ENCODE measurements at regions of chr9 and their contacts with region 1.

Region 1: DNA sequence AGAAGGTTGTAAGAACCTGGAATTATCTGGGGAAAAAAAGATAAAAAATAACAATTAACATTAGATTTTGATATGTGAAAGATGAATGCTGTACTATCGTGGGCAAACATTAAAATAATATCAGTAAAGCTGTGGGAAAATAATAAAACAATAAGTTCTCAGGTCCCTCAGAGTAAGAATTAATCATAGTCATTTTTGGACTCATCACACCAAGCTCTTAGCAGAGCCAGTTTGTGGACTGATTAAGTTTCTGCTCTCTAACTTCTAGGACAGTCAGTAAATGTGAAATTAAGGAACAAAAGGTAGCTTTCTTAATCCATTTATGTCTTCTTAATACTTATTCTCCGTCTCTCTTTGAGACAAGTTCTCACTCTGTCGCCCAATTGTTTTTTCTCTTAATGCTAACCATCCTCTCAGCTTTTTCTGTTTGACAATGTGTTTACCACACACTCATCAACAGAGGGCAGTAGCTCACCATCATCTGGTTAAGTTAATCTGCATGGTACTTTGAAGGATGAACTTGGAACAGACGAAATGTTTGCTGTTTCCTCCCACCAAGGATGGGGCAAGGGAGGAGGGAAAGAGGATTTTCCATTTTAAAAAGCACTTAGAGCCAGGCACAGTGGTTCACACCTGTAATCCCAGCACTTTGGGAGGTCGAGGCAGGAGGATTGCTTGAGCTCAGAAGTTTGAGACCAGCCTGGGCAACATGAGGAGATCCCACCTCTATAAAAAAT is 5.3 kb upstream of the ACO1 start:
- DNase-seq: peak; percentile 70
- ATAC-seq: peak; percentile 76
- H3K4me3 Mint-ChIP-seq: no peak overlapping the region
- H3K27ac Mint-ChIP-seq: no peak overlapping the region
- H3K4me1 Mint-ChIP-seq: peaks cover 14% of the 10 kb centered on the region
- H3K27me3 Mint-ChIP-seq: peaks cover 34% of the 10 kb centered on the region

Region 2: DNA sequence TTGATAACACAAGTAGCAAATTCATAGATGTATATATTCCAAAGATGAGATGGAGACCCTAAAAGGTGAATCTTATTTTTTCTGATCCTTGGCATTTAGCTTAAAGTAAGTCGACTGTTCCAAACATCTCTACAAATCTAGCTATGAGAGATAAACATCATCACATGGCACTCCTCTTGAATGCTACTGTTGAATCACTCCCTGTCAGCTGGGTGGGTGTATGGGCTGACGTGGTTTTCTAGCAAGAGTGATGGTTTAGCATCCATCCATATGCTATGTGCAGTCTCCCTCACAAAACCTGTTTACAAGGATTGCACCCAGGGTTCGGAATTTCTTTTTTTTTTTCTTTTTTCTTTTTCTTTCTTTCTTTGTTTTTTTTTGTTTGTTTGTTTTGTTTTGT is 19.0 kb after region 1 on chr9:
- CTCF ChIA-PET with region 1: interaction called, 21 read pairs
- POLR2A ChIA-PET with region 1: no interaction called
- DNase-seq: no peak
- ATAC-seq: no peak
- H3K4me3 Mint-ChIP-seq: no peak overlapping the region
- H3K27ac Mint-ChIP-seq: no peak overlapping the region
- H3K4me1 Mint-ChIP-seq: no peaks in the 10 kb centered on the region
- H3K27me3 Mint-ChIP-seq: no peaks in the 10 kb centered on the region

Region 3: DNA sequence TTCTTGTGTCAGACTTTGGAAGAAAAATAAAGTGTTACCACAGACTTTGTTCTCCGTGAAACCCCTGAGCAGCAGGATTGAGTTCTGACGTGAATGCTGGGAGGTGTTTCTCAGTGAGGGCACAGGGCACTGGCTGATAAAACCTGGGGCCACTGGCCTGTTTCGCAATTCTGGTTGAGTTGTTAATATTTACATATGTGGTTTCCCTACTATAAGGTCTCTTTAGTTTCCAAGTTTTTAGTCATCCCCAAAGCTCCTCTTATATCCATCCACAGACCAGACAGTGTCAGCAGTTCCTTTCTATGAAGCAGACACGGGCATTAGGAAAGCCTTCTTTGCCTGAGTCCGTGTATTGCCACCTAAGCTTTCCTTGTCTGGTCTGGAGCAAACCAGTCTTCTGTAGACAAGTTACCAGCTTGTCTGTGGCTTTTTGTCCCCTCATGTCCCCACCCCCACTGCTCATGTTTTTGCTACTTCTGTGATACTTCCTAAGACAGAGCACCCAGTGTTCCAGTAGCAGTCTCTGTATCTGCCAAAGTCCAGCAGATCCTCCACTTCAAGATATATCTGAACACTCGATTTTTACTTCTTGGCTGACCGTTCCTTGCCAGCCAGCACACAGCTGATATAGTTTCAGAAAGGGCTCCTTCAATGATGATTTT is 47.2 kb after region 1 on chr9:
- CTCF ChIA-PET with region 1: interaction called, 68 read pairs
- POLR2A ChIA-PET with region 1: no interaction called
- DNase-seq: no peak
- ATAC-seq: no peak
- H3K4me3 Mint-ChIP-seq: no peak overlapping the region
- H3K27ac Mint-ChIP-seq: peak overlapping the region; percentile 37
- H3K4me1 Mint-ChIP-seq: peaks cover 10% of the 10 kb centered on the region
- H3K27me3 Mint-ChIP-seq: no peaks in the 10 kb centered on the region

Region 4: GRCh38 chr9:32463500-32464293 is 84.5 kb after region 1 on chr9:
- CTCF ChIA-PET with region 1: interaction called, 10 read pairs
- POLR2A ChIA-PET with region 1: no interaction called
- DNase-seq: no peak
- ATAC-seq: no peak
- H3K4me3 Mint-ChIP-seq: no peak overlapping the region
- H3K27ac Mint-ChIP-seq: no peak overlapping the region
- H3K4me1 Mint-ChIP-seq: no peaks in the 10 kb centered on the region
- H3K27me3 Mint-ChIP-seq: no peaks in the 10 kb centered on the region

Region 5: GRCh38 chr9:32550562-32551433 is 171.6 kb after region 1 on chr9:
- CTCF ChIA-PET with region 1: interaction called, 85 read pairs
- POLR2A ChIA-PET with region 1: no interaction called
- DNase-seq: peak; percentile 95
- ATAC-seq: peak; percentile 81
- H3K4me3 Mint-ChIP-seq: peak overlapping the region; percentile 89
- H3K27ac Mint-ChIP-seq: peak overlapping the region; percentile 99
- H3K4me1 Mint-ChIP-seq: peaks cover 30% of the 10 kb centered on the region
- H3K27me3 Mint-ChIP-seq: no peaks in the 10 kb centered on the region

Region 6: GRCh38 chr9:32589083-32589723 is 210.0 kb after region 1 on chr9:
- CTCF ChIA-PET with region 1: interaction called, 36 read pairs
- POLR2A ChIA-PET with region 1: no interaction called
- DNase-seq: no peak
- ATAC-seq: peak; percentile 68
- H3K4me3 Mint-ChIP-seq: no peak overlapping the region
- H3K27ac Mint-ChIP-seq: no peak overlapping the region
- H3K4me1 Mint-ChIP-seq: no peaks in the 10 kb centered on the region
- H3K27me3 Mint-ChIP-seq: peaks cover 39% of the 10 kb centered on the region